ENCODE measurements at regions of chr15 and their contacts with region 1.

Region 1: GRCh38 chr15:81400640-81401236 is 26.7 kb upstream of the TMC3 start:
- DNase-seq: no peak
- H3K4me3 ChIP-seq: no peak overlapping the region
- H3K27ac ChIP-seq: no peak overlapping the region
- H3K4me1 ChIP-seq: no peaks in the 10 kb centered on the region
- H3K27me3 ChIP-seq: no peaks in the 10 kb centered on the region
- CTCF ChIP-seq: peak; percentile 50 to 83 (median 80)
- POLR2A ChIP-seq: no peak

Region 2: GRCh38 chr15:81274931-81275707 is 125.6 kb before region 1 on chr15:
- intact Hi-C with region 1: loop called (anchors 1 kb)
- DNase-seq: peak in 1 of 2 donors; percentile 89
- H3K4me3 ChIP-seq: no peak overlapping the region
- H3K27ac ChIP-seq: peak overlapping the region; percentile 78
- H3K4me1 ChIP-seq: peaks cover 23% of the 10 kb centered on the region
- H3K27me3 ChIP-seq: no peaks in the 10 kb centered on the region
- CTCF ChIP-seq: peak; percentile 66 to 90 (median 90)
- POLR2A ChIP-seq: no peak

Measured in vagina (tissue), 2 donors.